Activated CD4-positive, alpha-beta T cell treated with anti-CD3 and anti-CD28 coated beads for 36 hours (primary cell): ENCODE measurements at regions of chr17 and their contacts with region 1.

Region 1: GRCh38 chr17:79087428-79088143 is 13.0 kb downstream of the ENGASE start:
- DNase-seq: peak; percentile 86
- ATAC-seq: peak; percentile 91
- H3K4me3 Mint-ChIP-seq: no peak overlapping the region
- H3K27ac Mint-ChIP-seq: no peak overlapping the region
- H3K4me1 Mint-ChIP-seq: no peaks in the 10 kb centered on the region
- H3K27me3 Mint-ChIP-seq: peaks cover 5% of the 10 kb centered on the region

Region 2: GRCh38 chr17:79707931-79708891 is 620.6 kb after region 1 on chr17:
- CTCF ChIA-PET with region 1: no interaction called
- POLR2A ChIA-PET with region 1: no interaction called
- intact Hi-C with region 1: loop called in 1 of 2 experiments (anchors 1 kb)
- DNase-seq: peak; percentile 77
- ATAC-seq: peak; percentile 73
- H3K4me3 Mint-ChIP-seq: peak overlapping the region; percentile 21
- H3K27ac Mint-ChIP-seq: no peak overlapping the region
- H3K4me1 Mint-ChIP-seq: no peaks in the 10 kb centered on the region
- H3K27me3 Mint-ChIP-seq: no peaks in the 10 kb centered on the region